SK-N-SH (cell line): ENCODE measurements at regions of chr6 and their contacts with region 1.

Region 1: GRCh38 chr6:32984605-32985389 is 16.4 kb downstream of the BRD2 start:
- DNase-seq: peak; percentile 79
- H3K4me3 ChIP-seq: no peak overlapping the region; a peak in 1 of 4 replicates
- H3K27ac ChIP-seq: no peak overlapping the region; a peak in 1 of 4 replicates
- H3K4me1 ChIP-seq: no peaks in the 10 kb centered on the region; a peak in 2 of 4 replicates
- H3K27me3 ChIP-seq: no peaks in the 10 kb centered on the region
- CTCF ChIP-seq: peak; percentile 87
- EP300 ChIP-seq: no peak
- RAD21 ChIP-seq: peak; percentile 95

Region 2: GRCh38 chr6:32614366-32615081 is 370.3 kb before region 1 on chr6:
- CTCF ChIA-PET with region 1: no interaction called
- POLR2A ChIA-PET with region 1: no interaction called
- DNase-seq: no peak
- H3K4me3 ChIP-seq: no peak overlapping the region
- H3K27ac ChIP-seq: no peak overlapping the region
- H3K4me1 ChIP-seq: no peaks in the 10 kb centered on the region
- H3K27me3 ChIP-seq: no peaks in the 10 kb centered on the region
- CTCF ChIP-seq: no peak
- EP300 ChIP-seq: no peak
- RAD21 ChIP-seq: no peak

Region 3: GRCh38 chr6:32741031-32741960 is 243.5 kb before region 1 on chr6 and contains the start of gene HLA-DQA2:
- CTCF ChIA-PET with region 1: no interaction called
- POLR2A ChIA-PET with region 1: no interaction called
- DNase-seq: no peak
- H3K4me3 ChIP-seq: no peak within 1 kb of the TSS
- H3K27ac ChIP-seq: no peak within 1 kb of the TSS
- H3K4me1 ChIP-seq: no peaks in the 10 kb centered on the region
- H3K27me3 ChIP-seq: peaks cover 28% of the 10 kb centered on the region
- CTCF ChIP-seq: no peak
- EP300 ChIP-seq: no peak
- RAD21 ChIP-seq: no peak
- polyA plus RNA-seq, gene HLA-DQA2: not detected in 2 replicates

Region 4: DNA sequence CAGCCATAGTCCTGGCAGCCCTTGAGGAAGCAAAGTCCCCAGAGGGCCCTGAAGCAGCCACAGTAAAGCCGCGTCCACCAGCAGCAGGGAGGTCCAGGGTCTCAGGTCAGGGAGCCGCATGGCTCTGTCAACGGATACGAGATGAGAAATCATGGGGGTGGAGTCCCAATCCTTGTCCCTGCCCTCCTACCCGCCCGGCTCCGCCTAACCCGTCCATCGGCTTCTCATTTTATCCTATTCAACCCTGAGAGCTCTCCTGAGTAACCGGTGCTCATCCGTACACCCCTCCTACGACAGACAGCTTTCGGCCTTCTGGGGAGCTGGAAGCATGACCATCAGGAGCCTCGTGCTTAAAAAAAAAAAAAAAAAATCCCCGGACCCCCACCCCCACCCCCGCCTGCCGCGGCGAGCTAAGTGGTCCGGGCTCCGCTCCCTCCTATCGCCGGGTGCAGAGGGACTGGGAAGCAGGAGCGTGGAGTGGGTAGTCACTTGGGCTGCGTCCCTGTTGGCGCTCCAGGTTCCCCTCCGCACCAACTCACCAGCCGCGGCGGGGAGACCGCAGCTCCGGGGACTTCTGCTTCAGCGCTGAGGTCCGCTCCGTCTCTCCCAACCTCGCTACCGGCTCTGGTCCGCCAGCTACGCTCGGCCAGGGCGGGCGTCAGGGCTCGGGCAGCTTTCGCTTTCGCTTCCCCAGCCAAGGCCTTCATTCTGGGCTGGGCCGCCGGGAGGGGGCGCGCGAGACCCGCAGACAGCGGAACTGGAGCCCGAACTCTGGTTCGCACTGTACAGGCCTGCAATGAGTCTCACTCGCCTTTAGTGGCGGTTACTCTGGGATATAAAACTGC is 146.5 kb before region 1 on chr6 and contains the start of gene TAP2:
- CTCF ChIA-PET with region 1: interaction called, 12 read pairs
- POLR2A ChIA-PET with region 1: no interaction called
- DNase-seq: peak; percentile 95
- H3K4me3 ChIP-seq: peak within 1 kb of the TSS; percentile 87 to 90
- H3K27ac ChIP-seq: peak within 1 kb of the TSS; percentile 87 to 88
- H3K4me1 ChIP-seq: peaks cover 0 to 8% of the 10 kb centered on the region in 2 experiments; a peak in 1 of 4 replicates
- H3K27me3 ChIP-seq: no peaks in the 10 kb centered on the region
- CTCF ChIP-seq: peak; percentile 96
- EP300 ChIP-seq: peak in 1 of 2 experiments; percentile 38; a peak in 1 of 4 replicates
- RAD21 ChIP-seq: peak; percentile 85
- polyA plus RNA-seq, gene TAP2: 14.0 and 19.9 TPM in 2 replicates

Region 5: GRCh38 chr6:32885698-32886286 is 99.0 kb before region 1 on chr6:
- CTCF ChIA-PET with region 1: interaction called, 65 read pairs
- POLR2A ChIA-PET with region 1: no interaction called
- DNase-seq: peak; percentile 50
- H3K4me3 ChIP-seq: no peak overlapping the region; a peak in 1 of 4 replicates
- H3K27ac ChIP-seq: no peak overlapping the region
- H3K4me1 ChIP-seq: peaks cover 0 to 8% of the 10 kb centered on the region in 2 experiments; a peak in 1 of 4 replicates
- H3K27me3 ChIP-seq: peaks cover 14% of the 10 kb centered on the region; the same call in 1 of the 2 replicates
- CTCF ChIP-seq: peak; percentile 78
- EP300 ChIP-seq: no peak
- RAD21 ChIP-seq: peak; percentile 85

Region 6: DNA sequence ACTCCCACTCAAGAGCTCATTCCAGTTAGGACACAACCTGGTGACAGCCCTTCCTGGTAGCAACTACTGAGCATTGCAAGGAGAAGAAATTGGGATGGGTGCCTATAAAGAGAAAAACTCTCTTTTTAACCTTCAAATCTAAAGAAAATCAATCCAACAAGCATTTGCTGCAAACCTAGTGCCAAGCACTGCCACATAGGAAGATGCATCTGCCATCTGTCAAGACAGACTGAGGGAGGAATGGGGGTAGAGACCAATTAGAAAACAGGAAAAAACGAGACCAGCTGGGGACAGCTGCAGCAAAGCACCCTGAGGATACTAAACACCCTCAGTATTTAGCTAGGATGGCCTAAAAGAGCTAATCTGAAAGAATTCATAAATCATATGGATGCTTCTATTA is 71.8 kb before region 1 on chr6:
- CTCF ChIA-PET with region 1: interaction called, 23 read pairs
- POLR2A ChIA-PET with region 1: no interaction called
- DNase-seq: no peak
- H3K4me3 ChIP-seq: no peak overlapping the region
- H3K27ac ChIP-seq: no peak overlapping the region
- H3K4me1 ChIP-seq: no peaks in the 10 kb centered on the region
- H3K27me3 ChIP-seq: no peaks in the 10 kb centered on the region; the same call in 1 of the 2 replicates
- CTCF ChIP-seq: no peak
- EP300 ChIP-seq: no peak
- RAD21 ChIP-seq: no peak

Region 7: DNA sequence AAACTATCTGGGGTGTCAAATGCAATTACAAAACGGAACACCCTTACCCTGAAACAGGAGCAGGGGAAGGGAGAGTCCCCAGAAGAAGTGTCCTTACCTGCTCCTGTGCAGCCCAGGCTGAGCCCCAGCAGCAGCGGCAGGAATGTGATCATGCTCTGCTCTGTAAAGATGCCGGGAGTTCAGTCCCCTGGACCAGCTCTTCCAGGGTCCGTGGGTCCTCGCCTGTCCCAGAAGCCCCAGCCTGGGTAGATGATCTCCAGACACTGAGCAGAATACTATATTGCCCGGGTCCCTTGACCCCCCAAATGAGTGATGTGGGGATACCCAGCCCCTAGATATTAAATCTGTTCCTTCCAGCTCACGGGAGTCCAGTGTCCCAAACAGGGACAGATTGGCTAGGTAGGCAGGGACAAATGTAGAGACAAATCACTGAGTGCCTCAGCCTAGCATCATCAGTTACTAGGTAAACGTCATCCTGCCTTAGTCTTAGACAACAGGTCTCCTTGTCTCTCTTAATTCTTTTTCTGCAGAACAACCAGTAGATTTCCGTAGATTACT is 44.1 kb before region 1 on chr6 and contains the start of gene HLA-DMB:
- CTCF ChIA-PET with region 1: interaction called, 391 read pairs
- POLR2A ChIA-PET with region 1: no interaction called
- DNase-seq: peak; percentile 53
- H3K4me3 ChIP-seq: peak within 1 kb of the TSS; percentile 36 to 42; a peak in 3 of 4 replicates
- H3K27ac ChIP-seq: no peak within 1 kb of the TSS
- H3K4me1 ChIP-seq: peaks cover 0 to 3% of the 10 kb centered on the region in 2 experiments; a peak in 1 of 4 replicates
- H3K27me3 ChIP-seq: peaks cover 51% of the 10 kb centered on the region; the same call in 1 of the 2 replicates
- CTCF ChIP-seq: no peak
- EP300 ChIP-seq: no peak
- RAD21 ChIP-seq: no peak
- polyA plus RNA-seq, gene HLA-DMB: 0.10 TPM in 1 of 2 replicates, not detected in the other

Region 8: GRCh38 chr6:32952817-32953739 is 31.7 kb before region 1 on chr6 and contains the start of gene HLA-DMA:
- CTCF ChIA-PET with region 1: interaction called, 99 read pairs
- POLR2A ChIA-PET with region 1: interaction called, 3 read pairs
- DNase-seq: peak; percentile 42
- H3K4me3 ChIP-seq: peak within 1 kb of the TSS in 1 of 2 experiments; percentile 27; a peak in 1 of 4 replicates
- H3K27ac ChIP-seq: no peak within 1 kb of the TSS
- H3K4me1 ChIP-seq: peaks cover 0 to 6% of the 10 kb centered on the region in 2 experiments; a peak in 1 of 4 replicates
- H3K27me3 ChIP-seq: no peaks in the 10 kb centered on the region
- CTCF ChIP-seq: peak; percentile 77
- EP300 ChIP-seq: no peak
- RAD21 ChIP-seq: peak; percentile 47
- polyA plus RNA-seq, gene HLA-DMA: 1.2 and 1.5 TPM in 2 replicates

Region 9: DNA sequence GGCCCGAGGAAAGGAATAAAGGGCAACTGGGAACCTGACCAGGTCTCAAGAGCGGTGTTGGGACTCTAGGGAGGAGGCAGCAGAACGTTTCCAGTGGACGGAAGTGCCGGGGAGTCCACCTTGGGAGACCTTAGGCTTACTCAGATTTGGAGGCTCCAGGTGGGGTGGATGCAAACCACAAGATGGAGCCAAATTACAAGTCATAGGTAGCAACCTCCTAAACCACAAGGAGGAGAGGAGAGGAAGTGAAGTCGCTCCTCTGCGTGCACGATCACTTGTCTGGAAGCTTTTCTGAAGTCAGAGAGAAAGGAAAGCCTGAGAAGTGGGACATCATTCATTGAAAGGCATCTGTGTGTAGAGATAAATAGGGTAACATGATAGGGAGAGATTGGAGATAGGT is 15.3 kb after region 1 on chr6:
- CTCF ChIA-PET with region 1: interaction called, 71 read pairs
- POLR2A ChIA-PET with region 1: no interaction called
- DNase-seq: no peak
- H3K4me3 ChIP-seq: no peak overlapping the region
- H3K27ac ChIP-seq: no peak overlapping the region
- H3K4me1 ChIP-seq: peaks cover 0 to 16% of the 10 kb centered on the region in 2 experiments; a peak in 1 of 4 replicates
- H3K27me3 ChIP-seq: peaks cover 35% of the 10 kb centered on the region
- CTCF ChIP-seq: no peak
- EP300 ChIP-seq: no peak
- RAD21 ChIP-seq: peak; percentile 32; the same call in 1 of the 2 replicates